PC-9 (cell line): ENCODE measurements at regions of chr10 and their contacts with region 1.

Region 1: DNA sequence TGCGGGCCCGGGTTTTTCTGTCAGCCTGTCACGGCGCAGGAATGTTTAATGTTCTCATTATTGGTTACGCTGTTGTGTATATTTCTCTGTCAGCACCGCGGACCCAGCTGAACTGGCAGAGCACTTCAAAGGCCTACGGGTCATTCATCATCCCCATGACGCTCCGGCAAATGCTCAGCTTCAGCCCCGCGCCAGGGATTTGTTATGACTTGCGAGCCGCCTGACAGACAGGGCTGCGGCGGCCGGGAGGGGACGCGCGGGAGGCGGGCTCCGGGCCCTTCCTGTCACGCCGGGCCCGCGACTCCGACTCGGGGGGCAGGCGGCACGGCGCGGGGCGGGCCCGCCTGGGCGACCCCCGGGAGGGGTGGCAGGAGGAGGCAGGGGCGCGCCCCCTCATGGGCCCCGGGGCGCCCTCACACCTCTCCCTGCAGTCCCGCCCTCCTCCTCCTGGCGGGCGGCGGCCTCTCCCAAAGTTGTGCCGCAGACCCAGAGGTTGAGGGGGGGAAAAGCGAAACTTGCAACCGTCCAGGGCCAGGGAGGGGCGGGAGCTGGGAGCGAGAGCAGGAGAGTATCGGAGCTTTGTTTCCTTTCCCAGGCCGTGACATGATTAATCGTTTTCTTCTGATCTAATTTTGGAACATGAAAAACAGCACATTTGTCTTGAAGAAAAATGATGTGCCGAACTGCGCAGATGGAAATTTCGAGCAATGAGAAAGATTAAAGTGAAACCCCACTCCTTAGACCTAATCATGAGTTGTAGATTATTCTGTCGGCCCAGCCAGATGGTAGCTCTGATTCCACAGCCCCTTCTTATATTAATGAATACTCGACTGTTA is 59.3 kb upstream of the COMTD1 start:
- DNase-seq: peak; percentile 81 to 97
- H3K4me3 ChIP-seq: peak overlapping the region; percentile 61
- H3K27ac ChIP-seq: peak overlapping the region; percentile 98
- H3K4me1 ChIP-seq: peaks cover 50% of the 10 kb centered on the region
- H3K27me3 ChIP-seq: no peaks in the 10 kb centered on the region
- CTCF ChIP-seq: 0 out of 2 replicates have a peak, but pooled peaks have one; percentile 17

Region 2: GRCh38 chr10:75250910-75251309 is 44.2 kb before region 1 on chr10:
- CTCF ChIA-PET with region 1: interaction called, 4 read pairs
- POLR2A ChIA-PET with region 1: interaction called, 6 read pairs
- intact Hi-C with region 1: loop called (anchors 1 kb)
- DNase-seq: peak; percentile 95 to 96
- H3K4me3 ChIP-seq: no peak overlapping the region
- H3K27ac ChIP-seq: peak overlapping the region; percentile 93
- H3K4me1 ChIP-seq: peaks cover 63% of the 10 kb centered on the region
- H3K27me3 ChIP-seq: no peaks in the 10 kb centered on the region
- CTCF ChIP-seq: no peak

Region 3: DNA sequence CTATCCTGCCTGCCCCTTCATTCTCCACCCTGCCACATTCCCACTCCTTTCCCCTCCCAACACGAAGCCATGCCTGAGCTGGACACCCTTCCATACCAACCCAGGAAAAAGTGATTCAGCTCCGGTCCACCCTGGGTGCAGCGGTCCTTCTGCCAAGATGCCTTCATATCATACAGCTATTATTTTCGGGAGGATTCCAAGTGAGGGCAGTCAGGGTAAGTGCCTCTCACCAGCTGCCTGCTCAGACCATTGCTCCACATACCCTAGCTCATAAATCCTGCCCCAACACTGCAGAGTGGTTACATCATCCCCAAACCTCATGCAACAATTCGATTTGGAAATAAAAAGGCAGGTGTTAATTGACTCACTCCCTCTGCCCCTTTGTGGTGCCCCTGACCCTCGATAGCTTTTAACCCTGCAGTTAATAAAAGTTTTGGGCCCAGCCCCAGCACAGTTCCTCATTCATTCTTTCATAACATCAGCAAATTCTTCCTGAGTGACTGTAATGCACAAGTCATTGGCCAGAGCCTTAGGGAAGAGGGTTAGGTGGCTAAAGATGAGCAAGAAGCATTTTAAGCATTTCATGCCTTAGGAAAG is 63.8 kb after region 1 on chr10:
- CTCF ChIA-PET with region 1: no interaction called
- POLR2A ChIA-PET with region 1: interaction called, 6 read pairs
- intact Hi-C with region 1: loop called (anchors 10 kb)
- DNase-seq: peak; percentile 50 to 99
- H3K4me3 ChIP-seq: peak overlapping the region; percentile 44; the same call in 1 of the 2 replicates
- H3K27ac ChIP-seq: peak overlapping the region; percentile 98
- H3K4me1 ChIP-seq: peaks cover 57% of the 10 kb centered on the region
- H3K27me3 ChIP-seq: no peaks in the 10 kb centered on the region
- CTCF ChIP-seq: no peak

Region 4: GRCh38 chr10:75395066-75395931 is 100.2 kb after region 1 on chr10:
- CTCF ChIA-PET with region 1: no interaction called
- POLR2A ChIA-PET with region 1: no interaction called
- intact Hi-C with region 1: loop called (anchors 2 kb)
- DNase-seq: peak; percentile 58 to 60
- H3K4me3 ChIP-seq: peak overlapping the region; percentile 84
- H3K27ac ChIP-seq: peak overlapping the region; percentile 90
- H3K4me1 ChIP-seq: peaks cover 14% of the 10 kb centered on the region
- H3K27me3 ChIP-seq: no peaks in the 10 kb centered on the region
- CTCF ChIP-seq: peak; percentile 90